OCI-LY7 (cell line): ENCODE measurements at regions of chr6 and their contacts with region 1.

Region 1: DNA sequence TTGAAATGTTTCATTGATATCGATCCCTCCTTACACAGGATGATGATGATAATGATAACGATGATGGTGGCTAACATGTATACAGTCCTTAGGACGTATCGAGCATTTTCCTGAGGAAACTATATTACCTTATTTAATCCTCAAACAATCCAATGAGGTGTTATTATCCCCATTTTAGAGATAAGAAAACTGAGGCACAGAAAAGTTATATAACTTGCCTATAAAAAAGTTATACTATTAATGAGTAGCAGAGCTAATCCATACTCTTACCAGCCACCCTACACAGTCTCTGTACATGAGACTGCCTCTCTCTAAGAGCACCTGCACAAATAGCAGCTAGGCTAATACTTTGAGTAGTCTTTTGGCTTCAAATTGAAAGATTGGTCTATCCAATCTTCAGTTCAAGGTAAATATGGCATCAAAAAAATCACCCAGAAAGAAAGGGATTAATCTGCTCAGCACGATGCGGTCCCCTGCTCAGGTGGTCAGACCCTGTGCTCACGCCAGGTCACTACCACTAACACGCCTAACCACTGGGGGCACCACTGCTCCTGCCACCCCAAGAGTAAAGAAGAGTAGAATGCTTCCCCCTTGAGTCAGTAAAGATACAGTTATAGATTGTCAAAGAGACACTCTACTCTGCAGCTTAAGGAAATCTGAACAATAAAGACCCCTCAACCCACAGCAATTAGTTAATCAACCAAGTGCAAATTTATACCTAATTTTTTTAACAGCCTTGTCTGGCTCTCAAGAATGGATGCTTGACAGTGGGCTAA is 15.0 kb downstream of the GABBR1 start:
- DNase-seq: peak; percentile 18
- H3K4me3 ChIP-seq: no peak overlapping the region
- H3K27ac ChIP-seq: no peak overlapping the region
- H3K4me1 ChIP-seq: no peaks in the 10 kb centered on the region
- CTCF ChIP-seq: peak; percentile 72

Region 2: GRCh38 chr6:28586962-28587745 is 1030.8 kb before region 1 on chr6:
- CTCF ChIA-PET with region 1: no interaction called
- POLR2A ChIA-PET with region 1: no interaction called
- intact Hi-C with region 1: no loop called
- DNase-seq: no peak
- H3K4me3 ChIP-seq: no peak overlapping the region
- H3K27ac ChIP-seq: no peak overlapping the region
- H3K4me1 ChIP-seq: no peaks in the 10 kb centered on the region
- CTCF ChIP-seq: no peak

Region 3: GRCh38 chr6:29552512-29553051 is 65.4 kb before region 1 on chr6:
- CTCF ChIA-PET with region 1: no interaction called
- POLR2A ChIA-PET with region 1: no interaction called
- intact Hi-C with region 1: no loop called
- DNase-seq: peak; percentile 40
- H3K4me3 ChIP-seq: no peak overlapping the region
- H3K27ac ChIP-seq: no peak overlapping the region
- H3K4me1 ChIP-seq: no peaks in the 10 kb centered on the region
- CTCF ChIP-seq: no peak

Region 4: DNA sequence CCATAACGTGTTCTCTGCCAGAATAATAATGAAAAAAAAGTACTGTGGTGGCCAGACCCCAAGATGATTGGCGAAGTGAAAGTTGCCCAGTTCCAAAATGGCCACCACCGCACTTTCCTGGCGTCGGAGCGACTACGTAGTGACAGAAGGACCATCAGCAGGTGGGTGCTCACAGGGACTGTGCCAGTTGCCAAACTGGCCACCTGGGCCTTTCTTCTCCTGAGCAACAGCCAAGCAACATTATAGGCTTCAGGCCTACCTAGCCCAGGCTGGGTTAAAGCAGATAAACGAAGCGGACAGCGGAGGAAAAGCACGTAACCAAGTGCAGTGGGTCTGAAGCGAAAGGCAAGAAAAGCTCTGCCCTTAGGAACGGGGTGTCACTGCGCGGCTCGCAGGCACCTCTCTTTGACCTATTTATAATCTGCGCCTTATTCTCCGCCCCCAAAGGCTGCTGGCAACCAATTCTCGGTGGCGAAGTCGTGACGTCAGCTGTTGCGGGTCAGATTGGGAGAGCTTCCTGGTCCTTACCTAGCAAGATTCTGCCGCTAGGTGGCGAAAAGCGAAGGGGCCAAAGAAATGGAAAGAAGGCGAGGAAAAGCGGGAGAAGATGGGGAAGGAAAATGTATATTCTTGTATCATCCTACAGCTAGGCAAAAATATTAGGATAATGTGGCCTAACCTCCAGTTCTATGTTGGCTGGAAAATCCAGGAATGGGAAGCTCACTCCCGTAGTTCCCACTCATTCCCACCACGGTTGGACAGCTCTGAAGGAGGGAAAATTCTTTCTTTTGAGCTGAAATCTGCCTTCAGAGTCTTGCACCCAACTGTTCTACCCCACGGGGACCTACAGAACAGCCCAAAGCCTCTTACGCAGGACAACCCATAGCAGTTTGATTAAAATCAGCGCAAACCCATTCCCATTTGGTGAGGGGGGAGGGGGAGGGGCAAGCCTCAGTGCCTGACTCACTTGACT is 32.0 kb after region 1 on chr6:
- CTCF ChIA-PET with region 1: no interaction called
- POLR2A ChIA-PET with region 1: interaction called, 3 read pairs
- intact Hi-C with region 1: loop called (anchors 1 kb)
- DNase-seq: peak; percentile 98
- H3K4me3 ChIP-seq: peak overlapping the region; percentile 63
- H3K27ac ChIP-seq: peak overlapping the region; percentile 49
- H3K4me1 ChIP-seq: peaks cover 10% of the 10 kb centered on the region
- CTCF ChIP-seq: peak; percentile 92